ENCODE measurements at regions of chr6 and their contacts with region 1.

Region 1: GRCh38 chr6:24774696-24775519 is at the start of gene GMNN:
- DNase-seq: peak; percentile 100
- ATAC-seq: peak; percentile 99
- total RNA-seq, gene GMNN: 7.1 TPM

Region 2: DNA sequence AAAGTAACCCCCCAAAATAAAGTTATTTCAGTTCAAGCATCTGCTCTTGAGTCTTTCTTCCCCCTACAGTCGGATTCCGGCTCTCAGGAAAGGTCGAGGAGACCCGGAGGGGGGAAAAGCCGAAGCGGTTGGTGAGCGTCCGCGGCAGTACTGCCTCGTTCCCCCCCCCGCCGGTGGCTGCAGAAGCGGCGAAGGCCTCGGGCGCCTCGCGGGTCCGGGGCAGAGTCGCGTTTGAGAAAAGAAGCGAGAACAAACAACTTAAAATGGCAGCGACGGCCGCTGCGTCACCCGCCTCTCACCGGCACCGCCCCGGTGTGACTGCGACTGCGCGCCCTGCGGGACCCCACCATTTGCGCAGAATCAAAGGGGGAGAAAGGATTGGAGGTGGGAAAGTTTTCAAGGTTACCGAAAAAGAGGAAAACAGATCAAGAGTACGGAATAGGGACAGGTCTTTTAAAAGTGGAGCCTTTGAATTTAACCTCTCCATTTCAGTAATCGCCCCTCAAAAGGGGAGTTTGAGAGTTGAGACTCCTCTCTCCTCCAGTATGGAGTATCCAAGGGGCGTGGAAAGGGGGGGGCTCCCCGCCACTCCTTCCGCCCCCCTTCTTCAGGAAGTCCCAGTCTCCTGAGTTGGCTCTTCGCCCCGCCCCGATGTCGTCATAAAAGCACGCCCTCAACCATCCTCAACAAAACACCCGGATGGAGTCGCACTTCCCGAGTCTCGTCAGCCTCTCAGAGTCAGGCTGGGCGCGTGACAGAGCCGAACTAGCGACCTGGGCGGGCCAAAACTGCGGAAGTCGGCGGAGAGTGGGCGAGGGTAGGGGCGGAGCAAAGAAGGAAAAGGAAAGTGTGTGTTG is 54.1 kb before region 1 on chr6:
- intact Hi-C with region 1: loop called (anchors 10 kb)
- DNase-seq: peak; percentile 100
- ATAC-seq: peak; percentile 94